Psoas muscle (tissue), 8 donors: ENCODE measurements at regions of chr19 and their contacts with region 1.

Region 1: GRCh38 chr19:10653715-10654492 is at the start of gene ILF3:
- DNase-seq: peak; percentile 100
- ATAC-seq: peak; percentile 89 to 93 (median 90)
- H3K4me3 ChIP-seq: peak within 1 kb of the TSS; percentile 99
- H3K27ac ChIP-seq: peak within 1 kb of the TSS; percentile 99
- H3K4me1 ChIP-seq: peaks cover 46% of the 10 kb centered on the region
- H3K27me3 ChIP-seq: no peaks in the 10 kb centered on the region
- CTCF ChIP-seq: no peak
- total RNA-seq, gene ILF3: 112 to 189 (median 157) TPM

Region 2: GRCh38 chr19:10424011-10424637 is 229.8 kb before region 1 on chr19:
- intact Hi-C with region 1: no loop called
- DNase-seq: peak; percentile 83 to 91
- ATAC-seq: peak; percentile 88 to 94 (median 90)
- H3K4me3 ChIP-seq: peak overlapping the region; percentile 65
- H3K27ac ChIP-seq: peak overlapping the region; percentile 30
- H3K4me1 ChIP-seq: peaks cover 14% of the 10 kb centered on the region
- H3K27me3 ChIP-seq: peaks cover 0 to 47% (median 22%) of the 10 kb centered on the region in 3 donors
- CTCF ChIP-seq: peak; percentile 94

Region 3: DNA sequence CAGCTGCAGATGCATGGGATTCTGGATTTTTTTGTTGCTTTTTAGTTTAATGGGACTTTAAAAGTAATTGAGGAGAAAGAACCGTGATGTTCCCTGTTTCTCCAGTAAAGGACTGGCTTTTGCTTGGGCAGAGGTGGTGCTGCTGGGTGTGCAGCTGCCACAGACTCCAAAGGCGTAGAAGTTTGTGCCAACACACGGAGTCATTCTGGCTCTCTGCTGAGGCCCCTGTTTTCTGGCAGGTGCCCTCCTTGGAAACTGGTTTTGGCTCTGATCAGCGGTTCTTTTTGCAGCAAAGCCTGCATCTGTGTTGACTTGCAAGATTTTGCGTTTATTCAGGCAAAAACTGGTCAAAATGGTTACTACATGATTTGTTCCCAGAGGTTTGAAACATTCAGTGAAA is 31.3 kb after region 1 on chr19:
- intact Hi-C with region 1: no loop called
- DNase-seq: no peak
- ATAC-seq: no peak
- H3K4me3 ChIP-seq: no peak overlapping the region
- H3K27ac ChIP-seq: no peak overlapping the region
- H3K4me1 ChIP-seq: no peaks in the 10 kb centered on the region
- H3K27me3 ChIP-seq: no peaks in the 10 kb centered on the region
- CTCF ChIP-seq: no peak

Region 4: GRCh38 chr19:10695401-10696398 is 41.8 kb after region 1 on chr19:
- intact Hi-C with region 1: loop called (anchors 5 kb)
- DNase-seq: peak; percentile 95
- ATAC-seq: peak; percentile 98 to 99 (median 98)
- H3K4me3 ChIP-seq: peak overlapping the region; percentile 45
- H3K27ac ChIP-seq: no peak overlapping the region
- H3K4me1 ChIP-seq: peaks cover 8% of the 10 kb centered on the region
- H3K27me3 ChIP-seq: no peaks in the 10 kb centered on the region
- CTCF ChIP-seq: no peak

Region 5: GRCh38 chr19:10717356-10718204 is 63.7 kb after region 1 on chr19 and contains the start of gene DNM2:
- intact Hi-C with region 1: no loop called
- DNase-seq: peak; percentile 98 to 99
- ATAC-seq: peak; percentile 90 to 94 (median 92)
- H3K4me3 ChIP-seq: peak within 1 kb of the TSS; percentile 95
- H3K27ac ChIP-seq: peak within 1 kb of the TSS; percentile 96
- H3K4me1 ChIP-seq: peaks cover 27% of the 10 kb centered on the region
- H3K27me3 ChIP-seq: no peaks in the 10 kb centered on the region
- CTCF ChIP-seq: peak; percentile 78
- total RNA-seq, gene DNM2: 117 to 143 (median 130) TPM